ENCODE measurements at regions of chr14 and their contacts with region 1.

Region 1: GRCh38 chr14:74350211-74350927 is 2.1 kb downstream of the VRTN start:
- DNase-seq: no peak

Region 2: GRCh38 chr14:74324931-74325361 is 25.4 kb before region 1 on chr14:
- CTCF ChIA-PET with region 1: no interaction called
- POLR2A ChIA-PET with region 1: no interaction called
- DNase-seq: peak; percentile 65

Region 3: DNA sequence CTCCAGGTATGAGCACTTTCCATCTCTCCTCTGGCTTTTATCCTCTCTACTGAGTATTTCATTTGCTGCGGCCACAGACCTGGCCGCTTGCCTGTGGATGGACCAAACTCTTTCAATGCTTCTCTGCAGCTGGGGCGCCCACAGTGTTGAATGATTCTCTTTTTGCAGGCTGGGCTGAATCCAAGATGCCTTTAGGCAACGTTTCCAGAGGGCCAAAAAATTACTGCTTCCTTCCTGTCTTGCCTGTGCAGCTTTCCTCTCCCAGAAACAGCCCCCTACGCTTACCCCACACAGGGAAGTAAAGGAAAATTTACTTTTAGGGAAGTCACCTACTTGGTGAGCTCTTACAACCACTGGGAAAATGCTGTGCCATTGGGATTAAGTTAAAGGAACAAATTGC is 1021.9 kb after region 1 on chr14:
- CTCF ChIA-PET with region 1: interaction called, 13 read pairs
- POLR2A ChIA-PET with region 1: no interaction called
- DNase-seq: no peak